ENCODE measurements at regions of chr1 and their contacts with region 1.

Region 1: GRCh38 chr1:111399792-111400610 is 27.5 kb downstream of the OVGP1 start:
- DNase-seq: peak; percentile 35
- H3K4me3 ChIP-seq: peak overlapping the region in 1 of 2 experiments; percentile 33; a peak in 2 of 4 replicates
- H3K27ac ChIP-seq: no peak overlapping the region
- H3K4me1 ChIP-seq: no peaks in the 10 kb centered on the region
- H3K27me3 ChIP-seq: peaks cover 26% of the 10 kb centered on the region; the same call in 1 of the 2 replicates
- CTCF ChIP-seq: peak; percentile 80
- EP300 ChIP-seq: no peak
- RAD21 ChIP-seq: peak; percentile 79

Region 2: GRCh38 chr1:111030590-111030989 is 369.4 kb before region 1 on chr1:
- CTCF ChIA-PET with region 1: interaction called, 13 read pairs
- POLR2A ChIA-PET with region 1: no interaction called
- DNase-seq: peak; percentile 24
- H3K4me3 ChIP-seq: peak overlapping the region in 1 of 2 experiments; percentile 18; a peak in 1 of 4 replicates
- H3K27ac ChIP-seq: no peak overlapping the region
- H3K4me1 ChIP-seq: no peaks in the 10 kb centered on the region
- H3K27me3 ChIP-seq: peaks cover under 1% of the 10 kb centered on the region; the same call in 1 of the 2 replicates
- CTCF ChIP-seq: peak; percentile 81
- EP300 ChIP-seq: no peak
- RAD21 ChIP-seq: peak; percentile 52

Region 3: GRCh38 chr1:111127923-111128643 is 271.9 kb before region 1 on chr1:
- CTCF ChIA-PET with region 1: no interaction called
- POLR2A ChIA-PET with region 1: no interaction called
- DNase-seq: no peak
- H3K4me3 ChIP-seq: no peak overlapping the region
- H3K27ac ChIP-seq: no peak overlapping the region
- H3K4me1 ChIP-seq: no peaks in the 10 kb centered on the region
- H3K27me3 ChIP-seq: no peaks in the 10 kb centered on the region
- CTCF ChIP-seq: no peak
- EP300 ChIP-seq: no peak
- RAD21 ChIP-seq: no peak

Region 4: GRCh38 chr1:111222308-111223125 is 177.5 kb before region 1 on chr1:
- CTCF ChIA-PET with region 1: interaction called, 161 read pairs
- POLR2A ChIA-PET with region 1: no interaction called
- DNase-seq: peak; percentile 85
- H3K4me3 ChIP-seq: peak overlapping the region in 1 of 2 experiments; percentile 14; a peak in 1 of 4 replicates
- H3K27ac ChIP-seq: no peak overlapping the region
- H3K4me1 ChIP-seq: peaks cover 0 to 17% of the 10 kb centered on the region in 2 experiments; a peak in 3 of 4 replicates
- H3K27me3 ChIP-seq: no peaks in the 10 kb centered on the region
- CTCF ChIP-seq: peak; percentile 95
- EP300 ChIP-seq: no peak
- RAD21 ChIP-seq: peak; percentile 92

Region 5: DNA sequence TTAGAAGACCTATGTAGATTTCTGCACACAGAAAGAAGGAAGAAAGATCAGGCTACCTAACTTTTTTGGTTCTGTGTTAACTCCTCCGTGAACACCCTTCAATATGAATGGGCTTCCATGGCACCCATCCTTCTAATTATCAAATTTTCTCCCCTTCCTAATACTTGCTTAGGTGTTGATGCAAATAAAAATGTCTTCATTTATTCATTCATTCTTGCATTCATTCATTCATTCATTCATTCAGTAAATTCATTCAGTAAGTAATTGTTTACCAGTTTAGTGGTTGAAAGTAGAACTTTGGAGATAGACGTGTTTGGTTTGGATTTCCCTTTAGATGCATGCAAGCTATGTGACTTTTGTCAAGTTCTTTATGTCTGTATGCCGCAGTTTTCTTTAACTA is 167.9 kb before region 1 on chr1:
- CTCF ChIA-PET with region 1: interaction called, 13 read pairs
- POLR2A ChIA-PET with region 1: no interaction called
- DNase-seq: no peak
- H3K4me3 ChIP-seq: no peak overlapping the region
- H3K27ac ChIP-seq: no peak overlapping the region
- H3K4me1 ChIP-seq: peaks cover 0 to 37% of the 10 kb centered on the region in 2 experiments; a peak in 2 of 4 replicates
- H3K27me3 ChIP-seq: no peaks in the 10 kb centered on the region
- CTCF ChIP-seq: no peak
- EP300 ChIP-seq: no peak
- RAD21 ChIP-seq: no peak

Region 6: DNA sequence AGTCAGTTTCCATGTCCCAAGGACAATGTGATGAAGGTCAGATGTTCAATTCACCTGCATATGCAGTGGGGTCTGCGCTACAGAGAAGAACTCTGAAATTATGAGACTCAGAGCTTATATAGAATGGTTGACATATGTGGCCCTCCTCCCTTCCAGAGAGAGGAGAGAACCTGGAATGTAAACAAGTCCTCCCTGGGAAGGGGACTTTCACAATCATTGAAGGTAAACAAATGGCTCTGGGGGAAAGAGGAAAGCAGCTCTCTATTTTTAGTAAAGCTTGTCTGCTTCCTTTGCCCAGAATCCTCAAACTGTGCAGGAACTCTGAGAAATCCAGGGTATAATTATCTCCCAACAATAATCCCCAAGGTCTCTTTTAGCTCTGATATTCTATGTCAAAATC is 17.8 kb after region 1 on chr1:
- CTCF ChIA-PET with region 1: interaction called, 35 read pairs
- POLR2A ChIA-PET with region 1: no interaction called
- DNase-seq: no peak
- H3K4me3 ChIP-seq: no peak overlapping the region
- H3K27ac ChIP-seq: no peak overlapping the region
- H3K4me1 ChIP-seq: no peaks in the 10 kb centered on the region; a peak in 1 of 4 replicates
- H3K27me3 ChIP-seq: peaks cover 12% of the 10 kb centered on the region; the same call in 1 of the 2 replicates
- CTCF ChIP-seq: no peak
- EP300 ChIP-seq: no peak
- RAD21 ChIP-seq: no peak

Region 7: DNA sequence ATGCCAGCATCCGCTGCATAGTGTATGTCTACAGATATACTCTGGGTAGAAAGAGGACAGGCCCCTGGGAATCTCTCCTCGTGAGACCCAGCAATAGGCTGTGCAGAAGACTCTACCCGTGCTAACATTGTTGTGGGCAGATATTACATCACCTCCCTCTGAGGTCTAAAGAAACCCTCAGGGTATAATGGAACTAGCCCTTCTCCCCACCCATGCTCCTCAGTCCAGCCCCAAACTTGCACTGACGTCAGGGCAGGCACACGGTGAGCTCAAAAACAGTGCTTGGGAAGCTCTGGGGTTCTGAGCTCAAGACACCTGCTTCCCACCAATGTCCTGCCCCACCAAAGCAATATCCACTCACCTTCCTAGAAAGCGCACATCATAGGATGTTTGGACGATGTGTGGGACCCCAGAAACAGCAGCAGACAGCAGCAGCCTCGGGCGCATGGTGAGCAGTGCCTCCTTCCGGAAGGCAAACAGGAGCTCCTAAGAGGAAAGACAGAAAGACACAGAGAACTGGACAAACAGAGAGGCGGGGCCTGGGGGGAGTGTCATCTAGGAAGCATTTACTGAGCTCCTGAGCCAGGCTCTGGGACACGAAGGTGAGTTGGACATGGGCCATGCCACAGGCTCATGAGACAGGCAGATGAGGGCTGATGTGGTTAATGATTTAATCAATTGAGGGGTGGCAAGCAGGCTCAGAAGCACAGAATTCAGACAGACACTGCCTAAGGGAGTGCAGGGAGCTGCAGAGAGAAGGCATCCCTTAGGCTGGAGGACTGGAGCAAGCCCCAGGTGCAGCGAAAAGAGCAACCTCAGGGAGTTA is 22.8 kb after region 1 on chr1:
- CTCF ChIA-PET with region 1: interaction called, 35 read pairs
- POLR2A ChIA-PET with region 1: no interaction called
- DNase-seq: no peak
- H3K4me3 ChIP-seq: no peak overlapping the region
- H3K27ac ChIP-seq: no peak overlapping the region
- H3K4me1 ChIP-seq: no peaks in the 10 kb centered on the region; a peak in 1 of 4 replicates
- H3K27me3 ChIP-seq: peaks cover 4% of the 10 kb centered on the region; the same call in 1 of the 2 replicates
- CTCF ChIP-seq: no peak
- EP300 ChIP-seq: no peak
- RAD21 ChIP-seq: no peak